ENCODE measurements at regions of chr17 and their contacts with region 1.

Region 1: DNA sequence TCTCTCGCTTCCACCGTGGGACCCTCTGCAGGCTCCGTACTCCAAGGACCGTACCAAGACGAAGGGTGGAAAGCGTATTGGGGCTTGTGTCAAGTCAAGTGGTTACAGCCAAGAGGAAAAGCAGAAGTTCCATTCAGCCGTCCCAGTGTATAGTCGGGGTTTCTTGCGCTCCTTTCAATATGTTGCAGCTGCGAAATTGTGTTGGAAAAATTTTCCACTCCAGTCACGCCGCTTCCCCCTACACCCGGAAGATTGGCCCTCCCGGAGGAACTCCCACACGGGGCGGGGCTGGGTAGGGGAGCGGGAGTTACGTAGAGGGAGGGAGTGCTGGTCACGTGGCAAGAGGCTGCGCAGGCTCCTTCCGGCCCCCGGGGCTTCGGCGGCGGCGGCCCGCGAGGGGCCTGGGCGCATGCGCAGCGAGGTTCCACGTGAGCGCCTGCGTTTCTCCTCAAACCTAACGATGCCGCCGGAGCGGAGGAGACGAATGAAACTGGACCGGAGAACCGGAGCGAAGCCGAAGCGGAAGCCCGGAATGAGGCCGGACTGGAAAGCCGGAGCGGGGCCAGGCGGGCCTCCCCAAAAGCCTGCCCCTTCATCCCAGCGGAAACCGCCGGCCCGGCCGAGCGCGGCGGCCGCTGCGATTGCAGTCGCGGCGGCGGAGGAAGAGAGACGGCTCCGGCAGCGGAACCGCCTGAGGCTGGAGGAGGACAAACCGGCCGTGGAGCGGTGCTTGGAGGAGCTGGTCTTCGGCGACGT is at the start of gene UTP18:
- DNase-seq: peak; percentile 99
- H3K4me3 ChIP-seq: peak within 1 kb of the TSS; percentile 75 to 100 (median 99)
- H3K27ac ChIP-seq: peak within 1 kb of the TSS; percentile 94 to 99 (median 98)
- H3K4me1 ChIP-seq: peaks cover 34 to 89% (median 69%) of the 10 kb centered on the region in 6 donors
- H3K27me3 ChIP-seq: no peaks in the 10 kb centered on the region
- CTCF ChIP-seq: peak in 1 of 11 experiments; percentile 14
- POLR2A ChIP-seq: peak; percentile 3 to 17 (median 5)
- total RNA-seq, gene UTP18: 33.9 to 45.6 (median 36.7) TPM

Region 2: GRCh38 chr17:50976951-50977472 is 283.3 kb before region 1 on chr17:
- intact Hi-C with region 1: no loop called
- DNase-seq: no peak
- H3K4me3 ChIP-seq: no peak overlapping the region
- H3K27ac ChIP-seq: peak overlapping the region in 5 of 8 donors; percentile 2 to 52 (median 33)
- H3K4me1 ChIP-seq: peaks cover 0 to 14% (median 5%) of the 10 kb centered on the region in 6 donors
- H3K27me3 ChIP-seq: no peaks in the 10 kb centered on the region
- CTCF ChIP-seq: no peak
- POLR2A ChIP-seq: no peak

Region 3: GRCh38 chr17:51166197-51166986 is 93.9 kb before region 1 on chr17 and contains the start of gene NME2:
- intact Hi-C with region 1: loop called (anchors 5 kb)
- DNase-seq: peak; percentile 95
- H3K4me3 ChIP-seq: peak within 1 kb of the TSS; percentile 88 to 99 (median 96)
- H3K27ac ChIP-seq: peak within 1 kb of the TSS; percentile 86 to 96 (median 93)
- H3K4me1 ChIP-seq: peaks cover 0 to 34% (median 23%) of the 10 kb centered on the region in 6 donors
- H3K27me3 ChIP-seq: no peaks in the 10 kb centered on the region
- CTCF ChIP-seq: no peak
- POLR2A ChIP-seq: peak in 1 of 3 donors; percentile 41
- total RNA-seq, gene NME2: 209 to 316 (median 272) TPM

Region 4: DNA sequence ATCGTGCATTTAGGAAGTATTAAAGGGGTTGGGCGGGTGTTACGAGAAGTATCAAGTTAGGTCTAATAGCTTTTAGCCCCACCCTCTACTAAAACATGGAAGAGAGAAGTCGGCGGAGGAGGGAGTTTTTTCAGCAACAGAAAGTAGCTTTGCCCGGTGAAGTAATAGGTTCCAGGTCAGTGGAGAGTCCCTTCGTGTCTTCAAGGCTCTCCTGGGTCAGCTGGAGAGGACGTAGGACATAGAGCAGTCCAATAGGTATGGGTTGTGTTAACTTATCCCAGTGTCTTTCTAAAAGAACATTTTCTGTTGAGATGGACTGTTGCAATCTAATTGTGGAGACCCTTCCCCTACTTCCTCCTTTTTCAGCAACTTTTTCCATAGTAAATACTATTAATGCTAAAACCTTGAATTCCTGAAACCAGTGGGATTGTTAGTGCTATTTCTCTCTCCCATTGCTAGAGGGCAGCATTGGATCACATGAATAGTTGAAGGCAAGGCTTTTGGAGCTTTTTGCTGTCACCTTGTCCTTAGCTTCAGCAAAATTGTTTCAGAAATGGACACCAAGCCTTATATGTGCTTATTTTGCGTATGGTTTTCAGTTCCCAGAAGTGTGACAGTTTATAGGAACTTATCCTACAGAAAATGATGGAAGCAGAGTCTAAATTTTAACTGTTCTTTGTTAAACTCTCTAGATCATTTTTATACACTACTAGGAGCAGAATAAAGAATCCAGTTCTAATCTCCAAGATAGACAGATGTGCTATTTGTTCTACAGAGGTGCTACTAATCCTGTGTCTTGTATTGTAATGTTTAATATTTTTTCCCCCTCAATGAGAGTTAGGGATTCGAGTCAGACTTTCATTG is 38.4 kb after region 1 on chr17:
- intact Hi-C with region 1: no loop called
- DNase-seq: no peak
- H3K4me3 ChIP-seq: no peak overlapping the region
- H3K27ac ChIP-seq: peak overlapping the region in 2 of 8 donors; percentile 8 to 42
- H3K4me1 ChIP-seq: peaks cover 0 to 8% (median 2%) of the 10 kb centered on the region in 6 donors
- H3K27me3 ChIP-seq: no peaks in the 10 kb centered on the region
- CTCF ChIP-seq: peak in 9 of 11 experiments; percentile 23 to 67 (median 51)
- POLR2A ChIP-seq: no peak

Measured in spleen (tissue), 13 donors.